ENCODE measurements at regions of chr3 and their contacts with region 1.

Region 1: DNA sequence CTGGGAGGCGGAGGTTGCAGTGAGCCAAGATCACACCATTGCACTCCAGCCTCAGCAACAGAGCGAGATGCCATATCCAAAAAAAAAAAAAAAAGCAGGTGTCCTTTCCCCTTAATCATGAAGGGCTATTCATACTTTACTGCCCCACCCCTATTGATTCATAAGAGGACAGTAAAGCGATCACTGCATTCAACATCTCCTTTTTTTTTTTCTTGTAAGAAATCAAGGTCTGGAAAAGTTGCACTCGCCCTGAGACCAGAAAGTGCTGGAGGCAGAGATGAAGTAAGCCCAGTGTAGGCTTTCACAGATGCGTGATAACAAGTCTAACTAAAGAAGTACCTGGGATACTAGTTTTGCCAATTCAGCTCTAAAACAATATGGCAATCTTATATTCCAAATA is 24.2 kb downstream of the B3GNT5 start:
- DNase-seq: no peak
- ATAC-seq: no peak
- H3K4me3 ChIP-seq: no peak overlapping the region
- H3K27ac ChIP-seq: no peak overlapping the region
- H3K4me1 ChIP-seq: peaks cover 9% of the 10 kb centered on the region
- H3K27me3 ChIP-seq: no peaks in the 10 kb centered on the region
- CTCF ChIP-seq: no peak

Region 2: GRCh38 chr3:183308751-183309150 is 31.5 kb after region 1 on chr3:
- CTCF ChIA-PET with region 1: no interaction called
- POLR2A ChIA-PET with region 1: interaction called, 10 read pairs
- in situ Hi-C with region 1: no loop called
- intact Hi-C with region 1: no loop called
- DNase-seq: no peak
- ATAC-seq: no peak
- H3K4me3 ChIP-seq: no peak overlapping the region
- H3K27ac ChIP-seq: no peak overlapping the region
- H3K4me1 ChIP-seq: no peaks in the 10 kb centered on the region
- H3K27me3 ChIP-seq: no peaks in the 10 kb centered on the region
- CTCF ChIP-seq: no peak

Region 3: GRCh38 chr3:183328823-183329222 is 51.6 kb after region 1 on chr3:
- CTCF ChIA-PET with region 1: no interaction called
- POLR2A ChIA-PET with region 1: no interaction called
- in situ Hi-C with region 1: no loop called
- intact Hi-C with region 1: no loop called
- DNase-seq: no peak
- ATAC-seq: 0 out of 2 replicates have a peak, but pooled peaks have one; percentile 45
- H3K4me3 ChIP-seq: no peak overlapping the region
- H3K27ac ChIP-seq: no peak overlapping the region
- H3K4me1 ChIP-seq: no peaks in the 10 kb centered on the region
- H3K27me3 ChIP-seq: no peaks in the 10 kb centered on the region
- CTCF ChIP-seq: no peak

Region 4: DNA sequence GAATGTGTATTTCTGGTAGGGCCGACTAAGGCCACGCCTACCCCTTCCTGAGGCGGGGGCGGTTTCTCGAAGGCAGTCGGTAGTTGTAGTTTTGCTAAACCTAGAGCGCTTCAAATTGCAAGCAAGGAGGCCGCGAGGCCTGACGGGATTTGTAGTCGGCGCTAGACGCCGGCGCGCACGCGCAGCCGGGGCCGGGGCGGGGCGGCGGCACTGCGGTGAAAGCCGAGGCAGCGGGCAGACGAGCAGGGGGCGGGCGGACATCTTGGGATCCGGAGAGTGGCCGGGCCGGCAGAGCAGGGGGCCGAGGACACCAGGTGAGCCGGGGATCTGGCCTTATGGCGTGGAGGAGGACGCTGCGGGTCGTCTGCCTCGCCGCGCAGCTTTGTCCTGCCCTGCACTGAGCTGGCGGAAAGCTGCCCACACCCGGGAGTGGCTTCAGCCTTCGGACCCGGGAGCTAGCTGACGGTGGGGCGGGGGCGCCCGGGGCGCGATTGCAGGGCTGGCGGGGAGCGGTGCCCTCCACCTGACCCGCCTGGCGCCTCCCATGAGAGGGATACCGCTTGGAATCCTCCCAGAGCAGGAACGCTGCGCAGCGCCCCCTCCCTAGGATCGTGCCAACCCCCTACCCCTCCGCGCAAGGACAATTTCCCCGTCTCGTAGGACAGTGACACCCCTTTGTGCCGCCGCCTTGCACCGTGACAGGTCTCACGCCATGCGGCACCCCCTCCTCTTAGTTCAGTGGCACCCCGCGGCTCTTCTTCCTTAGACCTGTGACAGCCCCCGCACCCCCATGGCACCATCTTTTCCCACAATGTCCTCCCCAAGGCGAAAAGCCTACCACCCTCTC is 897.6 kb after region 1 on chr3 and contains the start of gene AP2M1:
- CTCF ChIA-PET with region 1: no interaction called
- POLR2A ChIA-PET with region 1: no interaction called
- in situ Hi-C with region 1: no loop called
- intact Hi-C with region 1: no loop called
- DNase-seq: peak; percentile 94
- ATAC-seq: peak; percentile 93
- H3K4me3 ChIP-seq: peak within 1 kb of the TSS; percentile 80 to 86
- H3K27ac ChIP-seq: peak within 1 kb of the TSS; percentile 88
- H3K4me1 ChIP-seq: peaks cover 18% of the 10 kb centered on the region
- H3K27me3 ChIP-seq: no peaks in the 10 kb centered on the region
- CTCF ChIP-seq: no peak
- total RNA-seq, gene AP2M1: 335 TPM

Measured in Panc1 (cell line).